Left cardiac atrium (tissue), 4 donors: ENCODE measurements at regions of chr7 and their contacts with region 1.

Region 1: DNA sequence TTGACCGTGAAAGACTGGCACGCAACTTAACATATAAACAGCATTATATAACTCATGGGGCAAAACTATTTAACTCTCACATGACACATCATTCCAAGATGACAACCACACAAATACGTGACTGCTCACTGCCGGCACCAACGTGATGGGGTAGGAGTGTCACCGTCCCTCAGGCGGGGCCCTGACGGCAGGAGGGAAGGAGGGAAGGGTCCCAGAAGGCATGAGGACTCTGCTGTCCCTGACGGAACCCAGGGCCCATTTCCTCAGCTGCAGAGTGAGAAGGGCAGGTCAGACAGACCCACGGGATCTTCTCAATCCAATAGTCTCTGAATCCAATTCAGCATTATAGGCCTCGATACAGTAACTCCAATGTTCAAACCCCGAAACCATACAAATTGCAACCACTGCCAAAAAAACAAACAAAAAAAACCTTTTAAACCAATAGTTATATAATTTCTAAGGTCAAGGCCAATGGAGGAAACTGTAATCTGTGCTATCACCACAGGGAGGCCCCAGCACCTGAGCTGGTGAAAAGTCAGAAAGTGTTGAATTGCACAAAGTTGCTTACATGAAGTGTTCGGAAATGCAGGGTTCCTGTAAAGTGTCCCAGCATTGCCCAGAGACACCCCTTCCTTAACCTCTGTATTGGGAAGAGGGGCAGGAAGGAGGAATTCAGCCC is 137.4 kb downstream of the TNS3 start:
- DNase-seq: no peak
- ATAC-seq: peak in 1 of 2 donors; percentile 43

Region 2: GRCh38 chr7:46791018-46791587 is 653.4 kb before region 1 on chr7:
- intact Hi-C with region 1: no loop called
- DNase-seq: no peak
- ATAC-seq: no peak

Region 3: DNA sequence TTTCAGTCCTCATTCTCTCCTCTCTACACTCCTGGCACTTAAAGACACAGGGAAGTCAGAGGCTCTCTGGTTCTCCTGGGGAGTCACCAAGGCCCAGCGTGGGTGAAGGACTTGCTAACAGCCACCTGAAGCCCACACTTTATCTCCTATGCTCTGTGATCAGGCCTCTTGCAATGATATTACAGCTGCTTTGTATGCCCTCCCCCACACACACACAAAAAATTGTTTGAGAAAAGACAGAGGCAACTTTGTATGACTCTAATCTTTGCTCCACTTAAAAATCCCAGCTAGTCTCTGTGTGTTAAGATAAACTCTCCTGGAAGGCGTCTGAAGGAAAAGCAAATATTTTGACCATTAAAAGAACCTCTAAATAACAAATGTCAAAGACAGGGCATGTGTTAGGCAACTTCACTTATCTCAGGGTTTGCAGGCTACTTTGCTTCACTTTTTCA is 369.8 kb before region 1 on chr7:
- intact Hi-C with region 1: no loop called
- DNase-seq: no peak
- ATAC-seq: peak; percentile 74 to 83

Region 4: DNA sequence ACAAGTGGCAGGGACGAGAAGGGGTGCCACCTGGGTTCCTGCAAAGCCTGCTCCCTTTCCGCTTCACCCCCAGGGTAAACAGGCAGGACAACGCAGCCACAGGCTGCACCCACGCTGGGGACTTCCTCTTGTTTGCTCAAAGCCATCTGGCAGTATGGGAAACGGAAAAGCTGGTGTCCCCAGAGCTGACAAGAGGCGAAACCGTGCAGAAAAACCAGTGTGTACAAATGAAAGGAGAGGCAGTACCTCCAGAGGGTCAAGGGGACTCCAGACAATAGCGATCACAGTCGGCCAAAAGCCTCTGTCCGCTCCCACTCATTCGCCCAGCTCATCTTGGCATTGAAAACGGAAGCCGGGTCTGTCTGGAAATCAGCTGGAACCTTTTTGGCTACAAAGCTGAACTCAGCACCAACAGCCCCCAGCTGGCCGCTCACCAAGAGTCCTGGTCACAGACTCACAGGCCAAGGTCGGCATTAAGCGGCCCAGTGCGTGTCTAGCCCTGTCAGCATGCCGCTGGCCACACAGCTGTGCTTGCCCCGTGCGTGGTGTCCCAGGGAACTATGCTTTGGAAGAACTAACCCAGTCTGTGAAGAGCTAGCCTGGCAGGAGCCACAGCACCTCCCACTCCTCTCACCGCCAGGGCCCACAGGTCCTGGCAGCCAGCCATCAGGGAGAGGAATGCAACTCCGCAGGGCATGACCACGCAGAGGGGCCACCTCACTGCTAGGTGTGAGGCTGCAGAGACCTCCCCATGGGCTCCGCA is 127.0 kb after region 1 on chr7:
- intact Hi-C with region 1: loop called (anchors 5 to 10 kb)
- DNase-seq: peak; percentile 88
- ATAC-seq: peak; percentile 82 to 85

Region 5: DNA sequence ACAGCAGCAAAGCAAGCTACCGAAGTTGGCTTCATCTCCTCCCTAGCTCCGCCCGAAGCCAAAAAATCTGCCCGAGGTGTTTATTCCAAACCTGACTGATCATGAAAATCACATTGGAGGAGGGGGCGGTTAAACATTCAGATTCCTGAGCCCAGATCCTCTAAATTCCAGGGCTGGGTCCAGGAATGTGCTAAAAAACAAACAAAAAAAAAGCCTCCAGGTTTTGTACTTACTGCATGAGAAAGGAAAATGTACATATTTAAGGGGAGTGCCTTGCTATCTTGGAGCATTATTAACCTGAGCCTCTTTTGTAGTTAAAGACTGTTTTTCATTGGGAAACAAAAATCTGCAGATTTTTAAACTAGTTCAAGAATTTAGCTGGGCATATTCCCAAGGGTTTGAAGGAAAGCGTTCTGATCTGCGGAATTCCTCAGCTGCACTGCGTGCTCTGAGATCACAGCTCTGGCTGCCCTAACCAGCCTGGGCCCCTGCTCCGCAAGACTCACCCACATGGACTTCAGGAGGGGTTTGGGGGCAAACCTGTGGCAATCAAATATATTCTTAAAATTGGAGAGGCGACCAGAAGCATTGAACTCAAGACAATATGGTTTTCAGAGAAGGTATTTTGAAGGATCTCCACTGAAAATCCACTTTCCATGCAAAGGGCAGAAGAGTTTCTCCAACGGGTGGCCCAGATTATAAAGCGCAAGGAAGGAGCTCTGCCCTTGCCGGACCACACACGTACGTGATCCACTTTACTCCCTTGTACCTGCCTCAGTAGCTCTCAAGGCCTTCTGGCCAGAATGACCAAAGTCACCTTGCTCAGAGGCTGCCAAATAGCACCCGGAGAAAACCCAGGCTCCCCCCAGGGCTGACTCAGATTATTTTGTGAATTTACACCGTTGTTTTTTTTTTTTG is 147.4 kb after region 1 on chr7:
- intact Hi-C with region 1: no loop called
- DNase-seq: no peak
- ATAC-seq: peak in 1 of 2 donors; percentile 27

Region 6: DNA sequence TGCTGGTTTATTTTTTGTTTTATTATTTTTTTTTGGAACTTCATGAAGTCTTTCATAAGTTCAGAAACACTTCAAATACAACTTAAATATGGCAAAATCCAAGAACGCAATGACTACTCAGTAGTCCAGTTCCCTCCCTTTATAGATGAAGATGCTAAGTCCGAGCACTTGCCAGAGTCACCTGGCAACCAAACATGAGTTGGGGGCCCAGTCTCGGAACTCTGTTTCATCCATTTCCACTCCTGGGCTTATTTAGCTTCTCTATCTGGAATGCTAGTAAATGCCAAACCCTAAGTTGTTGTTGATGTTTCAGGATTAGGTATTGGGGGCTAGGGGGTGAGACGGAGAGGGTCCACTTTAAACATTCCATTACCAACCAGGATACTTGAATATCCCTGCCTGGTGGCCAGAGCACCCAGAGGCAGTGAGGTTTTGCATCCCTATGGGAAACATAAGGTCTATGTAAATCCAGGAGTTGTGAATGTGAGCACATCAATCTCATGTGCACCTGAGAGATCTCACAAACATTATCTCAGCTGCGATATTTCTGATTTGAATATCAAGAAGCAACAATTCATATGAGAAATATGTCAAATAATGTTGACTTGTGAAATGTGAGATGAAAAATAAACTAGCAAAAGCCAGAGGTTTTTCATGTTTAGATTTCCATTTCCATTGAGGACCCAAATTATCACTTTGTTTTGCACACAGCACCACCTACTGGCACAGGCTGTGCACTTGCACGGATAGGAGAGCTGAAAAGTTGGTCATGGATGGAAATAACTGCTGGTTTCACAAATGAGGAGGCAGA is 374.5 kb after region 1 on chr7:
- intact Hi-C with region 1: loop called (anchors 5 to 10 kb)
- DNase-seq: peak; percentile 67
- ATAC-seq: peak; percentile 63 to 65